ENCODE measurements at regions of chr5 and their contacts with region 1.

Region 1: DNA sequence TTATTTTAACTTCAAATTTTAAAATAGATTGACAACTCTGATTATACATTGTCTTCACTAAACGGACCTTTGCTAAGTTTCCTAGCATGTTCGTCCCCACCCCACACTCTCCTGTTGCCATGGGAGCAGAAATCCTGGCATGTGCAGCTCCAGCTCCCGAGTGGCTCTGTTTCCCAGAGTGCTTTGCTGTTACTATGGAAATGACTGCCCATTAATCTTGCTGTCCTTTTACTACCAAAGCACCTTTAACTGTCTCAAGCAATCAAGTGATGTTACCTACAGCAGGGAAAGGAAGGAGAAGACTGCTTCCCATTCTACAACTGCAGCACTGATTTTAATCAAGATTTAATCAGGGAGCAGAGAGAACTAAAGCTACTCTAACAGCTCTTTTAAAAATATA is 212.0 kb upstream of the KIF2A start:
- DNase-seq: peak; percentile 35
- H3K4me3 Mint-ChIP-seq: peak overlapping the region; percentile 61
- H3K27ac Mint-ChIP-seq: no peak overlapping the region
- H3K4me1 Mint-ChIP-seq: peaks cover 12% of the 10 kb centered on the region
- H3K27me3 Mint-ChIP-seq: no peaks in the 10 kb centered on the region
- CTCF ChIP-seq: no peak

Region 2: GRCh38 chr5:61941637-61942036 is 152.3 kb before region 1 on chr5:
- CTCF ChIA-PET with region 1: no interaction called
- POLR2A ChIA-PET with region 1: no interaction called
- intact Hi-C with region 1: no loop called
- DNase-seq: no peak
- H3K4me3 Mint-ChIP-seq: no peak overlapping the region
- H3K27ac Mint-ChIP-seq: no peak overlapping the region
- H3K4me1 Mint-ChIP-seq: no peaks in the 10 kb centered on the region
- H3K27me3 Mint-ChIP-seq: no peaks in the 10 kb centered on the region
- CTCF ChIP-seq: no peak

Region 3: GRCh38 chr5:62082370-62082801 is 11.6 kb before region 1 on chr5:
- CTCF ChIA-PET with region 1: interaction called, 10 read pairs
- POLR2A ChIA-PET with region 1: interaction called, 23 read pairs
- intact Hi-C with region 1: no loop called
- DNase-seq: peak; percentile 70
- H3K4me3 Mint-ChIP-seq: no peak overlapping the region
- H3K27ac Mint-ChIP-seq: no peak overlapping the region
- H3K4me1 Mint-ChIP-seq: peaks cover 31% of the 10 kb centered on the region
- H3K27me3 Mint-ChIP-seq: no peaks in the 10 kb centered on the region
- CTCF ChIP-seq: no peak

Measured in MCF 10A (cell line).